ENCODE measurements at regions of chr12 and their contacts with region 1.

Region 1: DNA sequence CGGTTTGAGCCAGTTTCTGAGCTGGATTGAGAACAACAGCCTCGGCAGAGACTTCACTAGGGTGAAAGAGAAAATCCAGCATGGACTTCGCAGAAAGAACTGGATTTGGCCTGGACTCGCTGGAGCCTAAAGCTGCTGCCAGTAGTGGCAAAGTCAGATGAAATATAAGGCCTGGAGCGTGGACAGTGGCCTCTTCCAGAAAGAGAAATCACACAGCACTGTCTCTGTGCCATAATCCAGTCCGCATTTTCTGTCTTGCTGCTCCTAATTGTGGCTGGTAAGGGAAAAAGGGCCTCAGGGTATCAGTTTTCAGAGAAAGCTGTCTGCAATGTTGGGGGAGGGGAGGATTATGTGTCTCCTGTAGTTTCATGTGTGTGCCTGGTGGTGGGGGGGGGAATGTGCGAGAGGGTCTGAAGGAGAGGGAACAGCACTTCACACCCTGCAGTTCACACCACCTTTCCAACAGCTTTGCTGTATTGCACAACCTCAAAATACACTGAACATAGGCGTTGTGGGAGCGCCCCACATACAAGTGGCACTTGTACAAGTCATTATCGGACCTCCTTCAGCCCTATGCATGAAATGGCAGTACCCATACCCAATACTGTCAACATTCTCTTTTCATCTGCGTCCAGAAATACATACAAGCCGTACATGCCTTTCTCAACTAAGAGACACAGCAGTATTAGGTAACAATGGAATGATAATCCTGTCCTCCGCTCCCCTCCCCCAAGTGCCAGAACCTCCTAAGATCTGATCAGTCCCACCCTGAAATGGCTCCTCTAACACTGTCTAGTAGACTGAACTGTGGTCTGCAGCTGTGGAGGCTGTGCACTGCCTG is 107.5 kb upstream of the ATF7IP start:
- DNase-seq: peak; percentile 87
- H3K4me3 Mint-ChIP-seq: peak overlapping the region; percentile 76
- H3K27ac Mint-ChIP-seq: peak overlapping the region; percentile 95
- H3K4me1 Mint-ChIP-seq: peaks cover 53% of the 10 kb centered on the region
- H3K27me3 Mint-ChIP-seq: no peaks in the 10 kb centered on the region

Region 2: DNA sequence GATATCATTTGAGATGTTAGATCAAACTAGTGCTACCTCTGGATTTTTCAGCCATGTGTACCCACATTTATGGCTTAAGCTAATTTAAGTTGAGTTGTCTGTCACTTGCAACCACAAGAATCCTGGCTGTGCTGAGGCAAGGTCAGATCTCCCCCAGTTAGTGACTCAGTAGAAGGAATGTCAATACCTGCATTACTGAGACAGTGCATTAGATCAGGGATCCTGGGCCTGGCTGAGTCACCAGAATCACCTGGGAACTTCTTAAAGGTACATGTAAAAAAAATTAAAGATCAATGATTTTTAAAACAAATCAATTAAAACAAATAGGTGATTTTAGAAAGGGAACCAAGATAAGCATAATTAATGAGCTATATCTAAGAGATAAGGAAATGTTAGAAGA is 191.9 kb before region 1 on chr12:
- intact Hi-C with region 1: no loop called
- DNase-seq: no peak
- H3K4me3 Mint-ChIP-seq: no peak overlapping the region
- H3K27ac Mint-ChIP-seq: no peak overlapping the region
- H3K4me1 Mint-ChIP-seq: no peaks in the 10 kb centered on the region
- H3K27me3 Mint-ChIP-seq: no peaks in the 10 kb centered on the region

Region 3: GRCh38 chr12:14239350-14239934 is 18.5 kb before region 1 on chr12:
- intact Hi-C with region 1: loop called (anchors 1 kb)
- DNase-seq: no peak
- H3K4me3 Mint-ChIP-seq: peak overlapping the region; percentile 74
- H3K27ac Mint-ChIP-seq: peak overlapping the region; percentile 73
- H3K4me1 Mint-ChIP-seq: peaks cover 22% of the 10 kb centered on the region
- H3K27me3 Mint-ChIP-seq: no peaks in the 10 kb centered on the region

Region 4: GRCh38 chr12:14384783-14385638 is 127.1 kb after region 1 on chr12:
- intact Hi-C with region 1: loop called (anchors 1 kb)
- DNase-seq: peak; percentile 73
- H3K4me3 Mint-ChIP-seq: peak overlapping the region; percentile 86
- H3K27ac Mint-ChIP-seq: peak overlapping the region; percentile 97
- H3K4me1 Mint-ChIP-seq: peaks cover 58% of the 10 kb centered on the region
- H3K27me3 Mint-ChIP-seq: no peaks in the 10 kb centered on the region

Region 5: DNA sequence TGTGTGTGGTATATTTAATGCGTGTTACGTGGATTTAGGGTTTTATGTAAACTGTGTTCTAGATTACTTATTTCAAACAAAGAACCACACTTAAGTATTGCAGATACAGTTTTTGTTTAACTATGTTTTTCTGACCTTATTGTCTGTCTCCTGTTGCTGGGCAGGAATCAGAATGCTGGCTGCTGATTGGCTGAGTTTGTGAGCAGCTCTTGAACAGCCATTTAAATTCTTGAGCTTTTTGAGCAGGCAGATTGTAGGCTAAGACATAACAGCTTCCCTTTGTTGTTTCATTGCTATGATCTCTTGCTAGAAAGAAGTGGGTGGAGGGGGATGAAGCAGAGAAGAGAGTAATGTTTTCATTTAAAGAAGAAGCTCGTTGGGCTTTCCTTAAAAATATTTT is 159.8 kb after region 1 on chr12:
- intact Hi-C with region 1: loop called (anchors 1 kb)
- DNase-seq: peak; percentile 60
- H3K4me3 Mint-ChIP-seq: peak overlapping the region; percentile 75
- H3K27ac Mint-ChIP-seq: peak overlapping the region; percentile 88
- H3K4me1 Mint-ChIP-seq: peaks cover 56% of the 10 kb centered on the region
- H3K27me3 Mint-ChIP-seq: no peaks in the 10 kb centered on the region

Region 6: DNA sequence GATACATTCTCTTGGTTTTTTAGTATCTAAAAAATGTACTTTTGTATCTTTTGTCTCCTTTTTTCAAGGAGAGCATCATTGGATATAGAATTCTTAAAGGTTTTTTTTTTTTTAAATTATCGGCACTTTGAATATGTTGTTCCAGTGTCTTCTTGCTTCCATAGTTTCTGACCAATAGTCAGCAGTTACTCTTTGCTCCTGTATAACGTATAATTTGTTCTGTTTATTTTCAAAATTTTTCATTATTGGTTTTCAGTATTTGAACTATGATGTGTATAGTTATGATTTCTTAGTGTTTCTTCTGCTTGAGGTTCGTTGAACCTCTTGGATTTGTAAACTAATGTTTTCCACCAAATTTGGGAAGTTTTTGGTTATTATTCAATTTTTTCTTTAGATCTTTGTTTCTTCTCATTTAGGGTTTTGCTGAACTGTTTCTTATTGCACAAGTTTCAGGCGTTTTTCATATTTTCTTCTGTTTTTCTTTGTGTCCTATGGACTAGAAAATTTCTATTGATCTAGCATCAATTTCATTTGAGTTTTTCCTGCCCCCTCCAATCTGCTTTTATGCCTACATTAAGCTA is 215.8 kb after region 1 on chr12:
- intact Hi-C with region 1: loop called (anchors 5 kb)
- DNase-seq: no peak
- H3K4me3 Mint-ChIP-seq: no peak overlapping the region
- H3K27ac Mint-ChIP-seq: no peak overlapping the region
- H3K4me1 Mint-ChIP-seq: no peaks in the 10 kb centered on the region
- H3K27me3 Mint-ChIP-seq: no peaks in the 10 kb centered on the region

Region 7: DNA sequence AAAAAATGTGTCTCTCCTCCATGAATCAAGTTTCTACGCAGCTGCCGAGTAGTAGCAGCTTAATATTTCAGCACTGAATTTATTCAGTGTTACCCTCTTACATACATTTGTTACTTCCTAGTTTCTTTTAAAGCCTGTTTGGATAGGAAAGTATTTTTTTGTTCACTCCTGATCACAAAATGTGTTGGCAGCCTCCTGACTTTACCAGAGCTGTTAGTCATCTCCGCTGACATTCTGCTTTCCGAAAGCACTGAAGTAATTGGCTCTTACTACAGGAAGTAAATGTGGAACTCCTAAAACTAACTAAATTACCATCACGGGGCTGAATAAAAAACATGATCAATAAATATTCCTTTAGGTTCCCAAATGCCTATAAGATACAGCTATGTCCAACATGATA is 1305.7 kb after region 1 on chr12:
- intact Hi-C with region 1: loop called (anchors 10 kb)
- DNase-seq: peak; percentile 20
- H3K4me3 Mint-ChIP-seq: peak overlapping the region; percentile 87
- H3K27ac Mint-ChIP-seq: peak overlapping the region; percentile 89
- H3K4me1 Mint-ChIP-seq: peaks cover 77% of the 10 kb centered on the region
- H3K27me3 Mint-ChIP-seq: peaks cover 2% of the 10 kb centered on the region